CD8-positive, alpha-beta memory T cell (primary cell): ENCODE measurements at regions of chr15 and their contacts with region 1.

Region 1: DNA sequence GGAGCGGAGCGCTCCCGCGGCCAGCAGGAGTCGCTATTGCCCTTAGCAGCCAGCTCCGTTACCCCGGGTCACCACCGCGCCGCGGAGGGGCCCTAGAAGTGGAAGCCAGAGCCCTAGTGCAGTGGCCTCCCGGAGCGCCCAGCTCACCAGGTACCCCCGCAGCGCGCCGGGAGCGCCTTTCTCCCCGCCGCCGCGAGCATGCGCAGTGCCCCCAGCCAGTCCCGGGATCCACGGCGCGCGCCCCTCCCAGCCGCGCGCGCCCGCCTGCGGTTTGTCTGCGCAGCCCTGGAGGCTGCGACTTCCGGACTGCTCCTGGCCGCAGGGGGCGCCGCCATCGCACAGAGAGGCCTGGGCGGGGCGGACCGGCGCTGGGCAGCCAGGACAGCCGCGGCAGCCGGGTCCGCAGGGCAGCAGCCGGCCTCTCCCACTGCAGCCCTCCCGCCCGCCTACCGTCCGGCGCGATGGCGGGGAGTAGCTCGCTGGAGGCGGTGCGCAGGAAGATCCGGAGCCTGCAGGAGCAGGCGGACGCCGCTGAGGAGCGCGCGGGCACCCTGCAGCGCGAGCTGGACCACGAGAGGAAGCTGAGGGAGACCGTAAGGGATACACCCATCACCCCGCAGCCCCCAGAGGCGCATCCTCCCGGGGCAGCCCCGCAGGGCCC is 5.7 kb downstream of the TPM1 start:
- DNase-seq: peak; percentile 80 to 89 (median 81)
- H3K4me3 ChIP-seq: peak overlapping the region; percentile 70
- H3K4me3 Mint-ChIP-seq: peak overlapping the region; percentile 92 to 98 (median 95)
- H3K27ac ChIP-seq: peak overlapping the region; percentile 53
- H3K27ac Mint-ChIP-seq: peak overlapping the region in 7 of 8 donors; percentile 3 to 91 (median 58)
- H3K4me1 ChIP-seq: peaks cover 13% of the 10 kb centered on the region
- H3K4me1 Mint-ChIP-seq: peaks cover 17 to 46% (median 26%) of the 10 kb centered on the region in 3 donors
- H3K27me3 ChIP-seq: peaks cover 42% of the 10 kb centered on the region
- H3K27me3 Mint-ChIP-seq: peaks cover 30 to 36% of the 10 kb centered on the region in 2 donors

Region 2: GRCh38 chr15:63065262-63066221 is 17.3 kb after region 1 on chr15:
- CTCF ChIA-PET with region 1: interaction called, 22 read pairs
- POLR2A ChIA-PET with region 1: no interaction called
- DNase-seq: no peak
- H3K4me3 ChIP-seq: no peak overlapping the region
- H3K4me3 Mint-ChIP-seq: no peak overlapping the region
- H3K27ac ChIP-seq: no peak overlapping the region
- H3K27ac Mint-ChIP-seq: peak overlapping the region in 1 of 8 donors; percentile 33
- H3K4me1 ChIP-seq: no peaks in the 10 kb centered on the region
- H3K4me1 Mint-ChIP-seq: no peaks in the 10 kb centered on the region
- H3K27me3 ChIP-seq: no peaks in the 10 kb centered on the region
- H3K27me3 Mint-ChIP-seq: no peaks in the 10 kb centered on the region

Region 3: GRCh38 chr15:63093486-63094205 is 45.4 kb after region 1 on chr15:
- CTCF ChIA-PET with region 1: interaction called, 73 read pairs
- POLR2A ChIA-PET with region 1: no interaction called
- DNase-seq: peak; percentile 48 to 77 (median 54)
- H3K4me3 ChIP-seq: no peak overlapping the region
- H3K4me3 Mint-ChIP-seq: no peak overlapping the region
- H3K27ac ChIP-seq: no peak overlapping the region
- H3K27ac Mint-ChIP-seq: no peak overlapping the region
- H3K4me1 ChIP-seq: no peaks in the 10 kb centered on the region
- H3K4me1 Mint-ChIP-seq: peaks cover 0 to 4% (median 4%) of the 10 kb centered on the region in 3 donors
- H3K27me3 ChIP-seq: no peaks in the 10 kb centered on the region
- H3K27me3 Mint-ChIP-seq: peaks cover 6 to 8% of the 10 kb centered on the region in 2 donors

Region 4: GRCh38 chr15:63151665-63152064 is 103.4 kb after region 1 on chr15:
- CTCF ChIA-PET with region 1: no interaction called
- POLR2A ChIA-PET with region 1: no interaction called
- DNase-seq: no peak
- H3K4me3 ChIP-seq: no peak overlapping the region
- H3K4me3 Mint-ChIP-seq: peak overlapping the region in 1 of 7 donors; percentile 1
- H3K27ac ChIP-seq: no peak overlapping the region
- H3K27ac Mint-ChIP-seq: peak overlapping the region in 1 of 8 donors; percentile 27
- H3K4me1 ChIP-seq: peaks cover 11% of the 10 kb centered on the region
- H3K4me1 Mint-ChIP-seq: peaks cover 24 to 36% (median 26%) of the 10 kb centered on the region in 3 donors
- H3K27me3 ChIP-seq: no peaks in the 10 kb centered on the region
- H3K27me3 Mint-ChIP-seq: no peaks in the 10 kb centered on the region

Region 5: GRCh38 chr15:63332367-63333124 is 284.3 kb after region 1 on chr15:
- CTCF ChIA-PET with region 1: no interaction called
- POLR2A ChIA-PET with region 1: no interaction called
- DNase-seq: no peak
- H3K4me3 ChIP-seq: no peak overlapping the region
- H3K4me3 Mint-ChIP-seq: no peak overlapping the region
- H3K27ac ChIP-seq: no peak overlapping the region
- H3K27ac Mint-ChIP-seq: peak overlapping the region in 1 of 8 donors; percentile 0
- H3K4me1 ChIP-seq: no peaks in the 10 kb centered on the region
- H3K4me1 Mint-ChIP-seq: no peaks in the 10 kb centered on the region
- H3K27me3 ChIP-seq: no peaks in the 10 kb centered on the region
- H3K27me3 Mint-ChIP-seq: peaks cover 2 to 9% of the 10 kb centered on the region in 2 donors

Region 6: GRCh38 chr15:63402498-63403253 is 354.4 kb after region 1 on chr15:
- CTCF ChIA-PET with region 1: interaction called, 18 read pairs
- POLR2A ChIA-PET with region 1: interaction called, 3 read pairs
- DNase-seq: peak in 2 of 5 donors; percentile 28 to 42
- H3K4me3 ChIP-seq: no peak overlapping the region
- H3K4me3 Mint-ChIP-seq: peak overlapping the region in 1 of 7 donors; percentile 59
- H3K27ac ChIP-seq: no peak overlapping the region
- H3K27ac Mint-ChIP-seq: peak overlapping the region in 2 of 8 donors; percentile 16 to 81
- H3K4me1 ChIP-seq: no peaks in the 10 kb centered on the region
- H3K4me1 Mint-ChIP-seq: peaks cover 3 to 7% (median 6%) of the 10 kb centered on the region in 3 donors
- H3K27me3 ChIP-seq: no peaks in the 10 kb centered on the region
- H3K27me3 Mint-ChIP-seq: peaks cover 5 to 15% of the 10 kb centered on the region in 2 donors